GM10248 (cell line): ENCODE measurements at regions of chr1 and their contacts with region 1.

Region 1: GRCh38 chr1:94481473-94481933 is 60.1 kb downstream of the F3 start:
- DNase-seq: peak; percentile 47
- CTCF ChIP-seq: peak; percentile 85

Region 2: DNA sequence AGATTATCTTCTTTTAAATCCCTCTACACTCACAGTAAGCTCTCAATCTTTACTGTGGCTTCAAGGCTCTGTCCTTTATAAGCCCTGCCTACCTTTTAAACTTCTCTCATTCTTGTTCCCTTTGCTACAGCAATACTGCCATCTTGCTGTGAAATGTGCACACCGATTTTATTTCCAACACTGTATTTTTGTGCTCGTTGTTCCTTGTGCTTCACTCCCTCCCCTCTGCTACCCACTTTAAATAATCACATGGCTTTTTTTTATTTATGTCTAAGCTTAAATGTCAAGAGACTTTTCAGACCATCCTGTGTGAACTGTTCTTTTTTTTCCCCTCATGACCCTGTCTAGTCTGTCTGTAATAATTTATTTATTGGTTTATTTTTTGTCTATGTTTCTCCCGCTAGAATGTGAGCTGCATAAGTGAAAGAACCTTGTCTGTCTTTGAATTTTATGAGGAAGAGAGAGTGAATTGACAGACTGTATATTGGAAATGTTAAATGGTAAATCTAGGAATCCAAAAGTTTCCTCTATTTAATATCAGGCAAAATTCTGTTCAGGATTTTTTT is 17.7 kb before region 1 on chr1:
- CTCF ChIA-PET with region 1: interaction called, 33 read pairs
- POLR2A ChIA-PET with region 1: no interaction called
- DNase-seq: peak; percentile 22
- CTCF ChIP-seq: peak; percentile 60

Region 3: GRCh38 chr1:94471271-94471670 is 10.2 kb before region 1 on chr1:
- CTCF ChIA-PET with region 1: interaction called, 33 read pairs
- POLR2A ChIA-PET with region 1: no interaction called
- DNase-seq: no peak
- CTCF ChIP-seq: no peak

Region 4: GRCh38 chr1:94504601-94505000 is 23.1 kb after region 1 on chr1:
- CTCF ChIA-PET with region 1: interaction called, 12 read pairs
- POLR2A ChIA-PET with region 1: no interaction called
- DNase-seq: no peak
- CTCF ChIP-seq: no peak

Region 5: DNA sequence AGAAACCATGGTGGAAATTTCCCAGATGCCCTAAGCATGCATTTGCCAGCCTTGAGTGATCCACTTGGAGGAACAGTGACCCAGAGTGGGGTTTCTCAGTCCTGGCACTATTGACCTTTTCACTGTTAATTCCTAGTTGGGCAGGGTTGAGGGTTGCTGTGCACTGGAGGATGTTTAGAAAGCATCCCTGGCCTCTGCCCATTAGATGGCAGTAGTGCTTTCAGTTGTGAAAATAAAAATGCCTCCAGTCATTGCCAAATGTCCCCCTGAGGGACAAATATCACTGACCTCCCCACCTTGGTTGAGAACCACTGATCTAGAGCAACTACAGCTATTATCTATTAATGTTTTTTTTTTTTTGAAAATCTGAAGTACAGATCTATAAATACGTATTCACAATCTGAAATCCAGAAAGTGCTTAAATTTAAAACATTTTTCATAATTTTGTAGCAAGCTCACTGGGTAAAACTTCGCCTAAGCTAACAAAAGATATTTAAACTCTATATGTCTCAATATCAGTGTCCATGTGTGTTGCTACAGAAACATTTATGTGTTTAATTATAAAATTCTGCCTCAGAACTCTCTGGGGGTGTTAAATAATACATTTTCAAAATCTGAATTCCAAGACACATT is 32.7 kb after region 1 on chr1:
- CTCF ChIA-PET with region 1: interaction called, 13 read pairs
- POLR2A ChIA-PET with region 1: no interaction called
- DNase-seq: no peak
- CTCF ChIP-seq: peak; percentile 51